AG04449 (cell line): ENCODE measurements at regions of chr11 and their contacts with region 1.

Region 1: DNA sequence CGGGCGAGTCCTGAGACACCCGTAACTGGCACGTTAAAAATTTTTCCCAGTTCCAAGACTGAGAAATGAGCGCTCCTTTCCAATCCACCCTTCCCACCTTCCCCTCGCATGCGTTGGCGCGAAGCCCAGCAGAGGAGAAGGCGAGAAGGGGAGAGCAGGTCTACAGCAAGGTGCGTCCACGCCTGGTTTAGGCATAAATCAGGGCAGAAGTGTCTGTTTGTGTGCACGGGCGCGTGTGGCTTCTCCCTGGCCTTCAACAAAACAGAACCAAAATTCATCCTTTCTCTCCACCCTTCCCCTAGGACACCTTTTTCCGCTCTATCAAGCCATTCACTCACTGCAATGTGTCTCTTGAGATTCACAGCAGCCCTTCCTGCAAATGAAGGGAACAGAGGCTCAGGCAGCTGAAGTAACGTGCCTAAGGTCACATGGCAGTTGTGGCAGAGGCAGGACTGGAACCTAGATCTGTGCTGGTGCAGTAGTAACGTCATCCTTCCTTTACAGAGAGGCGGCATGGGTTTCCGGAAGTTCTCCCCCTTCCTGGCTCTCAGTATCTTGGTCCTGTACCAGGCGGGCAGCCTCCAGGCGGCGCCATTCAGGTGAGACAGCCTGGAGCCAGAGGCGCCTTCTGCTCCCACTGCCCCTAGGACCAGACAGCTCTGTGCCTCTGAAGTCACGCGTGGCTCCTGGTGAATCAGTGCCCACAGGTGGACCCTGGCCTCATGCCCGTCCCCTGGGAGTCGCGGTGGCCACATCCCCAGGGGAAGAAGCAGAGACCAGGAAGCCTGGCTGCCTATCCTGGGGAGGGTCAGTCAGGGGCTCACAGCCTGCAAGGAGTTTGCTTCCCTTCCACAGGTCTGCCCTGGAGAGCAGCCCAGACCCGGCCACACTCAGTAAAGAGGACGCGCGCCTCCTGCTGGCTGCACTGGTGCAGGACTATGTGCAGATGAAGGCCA is 1.1 kb downstream of the CALCB start:
- DNase-seq: no peak
- H3K4me3 ChIP-seq: peak overlapping the region; percentile 29; the same call in 1 of the 2 replicates
- CTCF ChIP-seq: peak; percentile 82

Region 2: DNA sequence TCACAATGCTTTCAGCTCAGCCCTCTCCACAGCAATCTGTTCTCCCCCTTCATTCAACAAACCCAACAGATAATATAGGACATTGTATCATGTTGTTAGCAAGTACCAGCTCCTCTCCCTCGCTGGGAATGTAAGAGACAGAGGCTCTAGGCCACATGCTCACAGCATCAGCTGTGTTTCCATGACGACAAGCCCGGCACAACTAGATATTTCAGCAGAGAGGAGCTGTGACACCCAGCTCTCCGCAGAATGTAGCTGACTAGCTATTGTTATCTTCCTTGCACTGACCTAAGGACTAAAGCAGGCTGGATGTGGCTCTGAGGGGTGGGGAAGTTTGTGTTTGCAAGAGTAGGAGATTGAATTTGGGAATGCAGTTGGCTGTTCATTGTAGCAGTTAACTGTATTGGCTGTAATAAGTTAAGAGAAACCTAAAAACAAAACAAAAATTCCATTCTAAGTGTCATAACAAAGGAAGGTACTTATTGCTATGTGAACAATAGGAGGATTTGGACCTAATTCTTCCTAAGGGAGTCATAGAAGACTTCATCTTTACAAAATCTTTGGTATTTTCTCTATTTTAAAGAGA is 687.5 kb before region 1 on chr11:
- CTCF ChIA-PET with region 1: no interaction called
- POLR2A ChIA-PET with region 1: no interaction called
- DNase-seq: peak; percentile 46
- H3K4me3 ChIP-seq: no peak overlapping the region
- CTCF ChIP-seq: no peak

Region 3: DNA sequence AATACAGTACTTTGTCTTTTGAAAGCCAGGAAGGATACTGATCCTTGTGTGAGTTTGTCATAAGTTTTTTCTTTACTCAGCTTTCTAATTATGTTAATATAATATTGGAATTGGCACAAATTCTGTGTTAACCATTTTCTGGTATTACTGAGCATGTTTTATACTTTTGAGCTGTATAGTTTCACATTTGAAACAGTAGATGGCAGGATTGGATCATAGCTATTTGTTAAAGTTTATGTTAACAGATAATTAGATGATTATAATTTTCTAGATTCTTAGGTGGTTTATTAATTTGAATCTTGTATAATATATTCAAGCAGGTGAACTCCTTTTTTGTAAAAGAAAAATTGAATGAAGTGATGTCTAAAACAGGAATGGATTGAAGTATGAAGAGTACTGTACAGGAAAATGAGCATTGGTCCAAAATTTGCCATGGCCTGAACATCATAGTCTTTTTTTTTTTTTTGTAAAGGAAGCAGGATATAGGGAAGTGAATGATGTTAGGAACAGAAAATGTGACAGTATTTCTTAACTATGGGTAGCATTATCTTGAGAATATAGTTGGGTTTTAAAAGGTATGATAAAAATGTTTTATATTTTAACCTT is 284.5 kb before region 1 on chr11:
- CTCF ChIA-PET with region 1: interaction called, 41 read pairs
- POLR2A ChIA-PET with region 1: no interaction called
- DNase-seq: no peak
- H3K4me3 ChIP-seq: no peak overlapping the region
- CTCF ChIP-seq: no peak

Region 4: DNA sequence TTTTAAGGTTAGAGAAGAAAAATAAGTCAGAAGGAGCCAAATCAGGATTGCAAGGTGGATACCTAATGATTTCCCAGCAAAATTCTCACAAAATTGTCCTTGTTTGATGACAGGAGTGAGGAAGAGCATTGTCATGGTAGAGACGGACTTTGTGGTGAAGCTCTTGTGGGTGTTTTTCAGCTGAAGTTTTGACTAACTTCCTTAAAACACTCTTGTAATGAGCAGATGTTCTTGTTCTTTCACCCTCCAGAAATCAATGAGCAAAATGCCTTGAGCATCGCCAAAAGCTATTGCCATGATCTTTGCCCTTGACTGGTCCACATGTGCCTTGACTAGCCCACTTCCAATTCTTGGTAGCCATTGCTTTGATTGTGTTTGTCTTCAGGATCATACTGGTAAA is 18.9 kb after region 1 on chr11:
- CTCF ChIA-PET with region 1: interaction called, 13 read pairs
- POLR2A ChIA-PET with region 1: no interaction called
- DNase-seq: no peak
- H3K4me3 ChIP-seq: no peak overlapping the region
- CTCF ChIP-seq: no peak

Region 5: GRCh38 chr11:15208378-15209222 is 134.1 kb after region 1 on chr11:
- CTCF ChIA-PET with region 1: interaction called, 10 read pairs
- POLR2A ChIA-PET with region 1: no interaction called
- DNase-seq: no peak
- H3K4me3 ChIP-seq: no peak overlapping the region
- CTCF ChIP-seq: peak; percentile 95

Region 6: DNA sequence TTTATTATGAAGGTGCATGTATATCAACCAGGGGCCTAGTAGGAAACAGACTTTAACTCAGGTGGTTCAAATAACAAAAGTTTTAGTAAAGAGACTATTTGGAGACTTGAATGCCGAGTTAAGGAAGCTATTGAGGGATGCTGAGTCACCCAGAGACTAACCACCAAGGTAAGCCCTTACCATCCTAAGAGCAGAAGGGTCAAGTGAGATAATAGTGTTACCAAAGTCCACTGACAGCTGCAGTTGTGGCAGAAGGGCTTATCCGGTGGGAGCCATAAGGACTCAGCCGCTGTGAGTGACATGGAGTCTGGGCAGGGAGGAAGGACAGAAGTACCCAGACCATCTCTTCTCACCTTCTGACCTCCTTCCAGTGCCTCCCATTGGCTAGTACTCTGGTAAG is 174.3 kb after region 1 on chr11:
- CTCF ChIA-PET with region 1: no interaction called
- POLR2A ChIA-PET with region 1: no interaction called
- DNase-seq: no peak
- H3K4me3 ChIP-seq: no peak overlapping the region
- CTCF ChIP-seq: no peak